Left lung (tissue), 14 donors: ENCODE measurements at regions of chr1 and their contacts with region 1.

Region 1: DNA sequence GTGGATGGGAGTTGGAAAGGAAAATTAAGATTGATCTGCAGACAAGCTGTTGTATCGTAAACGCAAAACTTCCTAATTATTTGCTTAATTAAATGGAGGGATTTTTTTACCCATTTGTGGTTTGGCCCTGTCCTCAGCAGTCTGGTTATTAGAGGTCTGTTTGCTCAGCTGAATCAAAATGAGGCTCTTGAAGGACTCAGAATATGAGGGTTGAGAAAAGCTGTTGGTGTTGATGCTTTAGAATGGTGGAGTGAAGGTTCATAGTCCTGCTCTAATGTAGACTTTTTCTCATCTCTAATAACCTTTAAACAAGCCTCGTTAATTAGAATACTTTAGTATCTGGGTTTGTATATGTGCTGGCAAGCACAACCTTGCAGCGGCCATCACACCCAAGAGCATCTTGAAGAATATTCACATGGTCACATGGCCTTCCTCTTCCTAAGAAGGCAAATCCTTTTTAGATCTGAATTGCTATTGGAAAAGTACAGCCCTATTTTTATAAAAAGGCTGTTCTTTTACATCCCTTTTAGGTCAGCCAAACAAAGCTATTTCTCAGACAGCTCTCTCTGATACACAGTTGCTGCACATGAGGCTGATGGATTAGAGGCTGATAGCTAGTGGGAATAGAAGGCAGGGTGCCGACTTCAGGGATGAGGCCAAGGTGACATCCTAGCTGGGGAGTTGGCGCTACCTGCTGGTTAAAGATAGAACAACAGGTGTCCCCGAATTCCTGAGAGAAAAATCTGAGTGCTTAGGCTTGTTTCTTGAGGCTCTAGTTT is 53.8 kb downstream of the MACF1 start:
- DNase-seq: peak in 2 of 4 donors; percentile 35 to 59
- ATAC-seq: peak; percentile 88
- H3K4me3 ChIP-seq: no peak overlapping the region
- H3K27ac ChIP-seq: peak overlapping the region in 1 of 2 donors; percentile 17
- H3K4me1 ChIP-seq: peaks cover 3 to 33% of the 10 kb centered on the region in 2 donors
- H3K27me3 ChIP-seq: no peaks in the 10 kb centered on the region
- CTCF ChIP-seq: peak; percentile 57 to 67

Region 2: GRCh38 chr1:39129514-39129913 is 128.8 kb before region 1 on chr1:
- intact Hi-C with region 1: loop called in 1 of 2 experiments (anchors 10 kb)
- DNase-seq: no peak
- ATAC-seq: peak; percentile 55
- H3K4me3 ChIP-seq: no peak overlapping the region
- H3K27ac ChIP-seq: peak overlapping the region; percentile 60 to 79
- H3K4me1 ChIP-seq: peaks cover 44 to 89% of the 10 kb centered on the region in 2 donors
- H3K27me3 ChIP-seq: no peaks in the 10 kb centered on the region
- CTCF ChIP-seq: no peak

Region 3: GRCh38 chr1:39204441-39205081 is 53.8 kb before region 1 on chr1 and contains the start of gene MACF1:
- intact Hi-C with region 1: loop called in 1 of 2 experiments (anchors 10 kb)
- DNase-seq: peak in 3 of 4 donors; percentile 67 to 83 (median 71)
- ATAC-seq: peak; percentile 78
- H3K4me3 ChIP-seq: peak within 1 kb of the TSS; percentile 18 to 37
- H3K27ac ChIP-seq: peak within 1 kb of the TSS; percentile 92 to 95
- H3K4me1 ChIP-seq: peaks cover 12 to 64% of the 10 kb centered on the region in 2 donors
- H3K27me3 ChIP-seq: no peaks in the 10 kb centered on the region
- CTCF ChIP-seq: peak in 1 of 2 donors; percentile 12
- polyA plus RNA-seq, gene MACF1: 411 to 484 (median 446) TPM

Region 4: GRCh38 chr1:39398278-39399021 is 140.1 kb after region 1 on chr1:
- intact Hi-C with region 1: no loop called
- DNase-seq: peak in 2 of 4 donors; percentile 38 to 64
- ATAC-seq: peak; percentile 92
- H3K4me3 ChIP-seq: no peak overlapping the region
- H3K27ac ChIP-seq: peak overlapping the region; percentile 75 to 86
- H3K4me1 ChIP-seq: peaks cover 47 to 79% of the 10 kb centered on the region in 2 donors
- H3K27me3 ChIP-seq: no peaks in the 10 kb centered on the region
- CTCF ChIP-seq: no peak

Region 5: DNA sequence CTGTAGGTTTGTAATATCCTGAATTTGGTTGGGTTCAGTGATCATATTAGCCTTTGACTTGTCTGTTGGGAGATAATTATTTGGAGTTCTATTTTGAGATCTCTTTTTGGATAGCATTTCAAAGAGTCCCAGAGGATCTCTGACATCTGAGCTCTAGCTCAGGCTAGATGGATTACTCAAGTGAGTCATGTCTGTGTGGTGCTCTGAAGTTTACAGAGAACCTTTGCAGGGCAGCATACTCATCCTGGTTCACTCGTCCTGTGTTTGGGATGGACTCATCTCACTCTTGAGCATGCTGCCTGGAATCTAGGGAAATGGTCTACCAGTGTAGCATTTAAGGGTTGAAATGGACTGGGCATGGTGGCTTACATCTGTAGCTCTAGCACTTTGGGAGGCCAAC is 203.7 kb after region 1 on chr1:
- intact Hi-C with region 1: no loop called
- DNase-seq: no peak
- ATAC-seq: no peak
- H3K4me3 ChIP-seq: no peak overlapping the region
- H3K27ac ChIP-seq: no peak overlapping the region
- H3K4me1 ChIP-seq: no peaks in the 10 kb centered on the region
- H3K27me3 ChIP-seq: no peaks in the 10 kb centered on the region
- CTCF ChIP-seq: no peak